ENCODE measurements at regions of chr11 and their contacts with region 1.

Region 1: DNA sequence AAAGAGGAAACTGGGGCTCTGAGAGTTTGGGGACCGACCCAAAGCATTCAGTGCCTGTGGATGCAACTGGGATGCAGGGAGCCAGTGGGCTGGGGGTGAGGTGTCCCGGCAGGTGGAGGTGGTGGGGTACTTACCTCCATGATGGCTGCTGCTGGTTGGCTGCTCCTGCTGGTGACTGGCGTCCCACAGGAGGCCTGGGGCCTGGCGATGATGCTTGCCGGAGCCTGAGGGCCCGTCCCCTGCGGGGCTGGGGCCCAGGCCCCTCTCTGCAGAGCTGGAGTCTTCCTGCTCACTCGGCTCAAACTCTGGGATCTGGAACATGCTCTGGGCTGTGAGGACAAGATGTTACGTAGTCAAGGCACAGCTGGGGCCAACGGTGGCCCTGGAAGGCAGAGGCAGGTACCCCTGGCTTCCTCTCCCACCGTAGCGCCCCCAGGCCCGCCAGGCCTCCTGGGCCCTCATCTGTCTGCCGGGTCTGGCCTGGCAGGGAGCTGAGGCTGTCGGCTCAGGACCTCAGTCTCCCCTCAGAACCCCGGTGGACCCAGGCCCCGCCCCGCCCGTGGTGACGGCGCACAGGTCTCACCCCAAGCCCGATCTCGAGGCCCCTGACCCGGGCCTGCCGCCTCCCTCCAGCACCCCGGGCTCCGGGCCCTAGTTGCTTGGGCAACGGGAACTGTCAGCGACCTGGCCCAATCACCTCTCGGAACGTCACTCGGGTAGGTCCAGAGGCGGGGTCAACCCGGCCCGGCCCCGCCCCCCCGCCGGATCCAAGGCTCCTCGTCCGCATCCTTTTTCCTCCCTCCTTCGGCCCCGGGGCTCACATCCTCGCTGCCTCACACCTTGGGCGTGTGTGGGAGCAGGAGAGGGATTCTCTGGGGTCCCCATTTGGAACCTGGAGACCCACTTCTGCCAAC is at the start of gene BAD:
- DNase-seq: no peak
- H3K4me3 ChIP-seq: peak within 1 kb of the TSS; percentile 73
- CTCF ChIP-seq: no peak

Region 2: DNA sequence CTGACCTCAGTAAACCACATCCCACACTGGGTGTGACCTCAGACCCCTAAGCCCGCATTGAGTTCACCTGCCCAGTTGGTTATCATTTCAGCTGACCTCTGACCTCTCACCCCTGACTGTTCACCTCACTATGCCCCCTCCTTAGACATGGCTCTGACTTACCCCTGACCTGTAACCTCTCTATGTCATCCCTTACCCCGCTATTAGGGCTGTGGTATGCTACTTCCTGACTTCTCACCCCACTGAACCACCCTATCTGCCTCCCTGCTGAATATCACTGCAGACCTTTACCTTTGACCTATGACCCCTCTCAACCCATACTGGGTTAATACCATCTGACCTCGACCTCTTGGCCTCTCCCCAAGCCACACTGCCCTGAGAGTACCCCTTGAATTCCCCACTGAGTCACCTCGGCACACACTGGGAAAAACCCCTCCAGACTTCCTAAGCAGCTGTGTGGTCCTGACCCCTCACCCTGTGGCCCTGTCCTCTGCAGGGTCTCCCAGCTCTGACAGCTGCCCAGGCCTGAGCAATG is 24.7 kb before region 1 on chr11:
- CTCF ChIA-PET with region 1: no interaction called
- POLR2A ChIA-PET with region 1: no interaction called
- DNase-seq: no peak
- H3K4me3 ChIP-seq: no peak overlapping the region
- CTCF ChIP-seq: no peak

Region 3: GRCh38 chr11:64269380-64270234 is 14.7 kb before region 1 on chr11:
- CTCF ChIA-PET with region 1: interaction called, 26 read pairs
- POLR2A ChIA-PET with region 1: interaction called, 9 read pairs
- DNase-seq: peak; percentile 99
- H3K4me3 ChIP-seq: peak overlapping the region; percentile 69
- CTCF ChIP-seq: no peak

Region 4: DNA sequence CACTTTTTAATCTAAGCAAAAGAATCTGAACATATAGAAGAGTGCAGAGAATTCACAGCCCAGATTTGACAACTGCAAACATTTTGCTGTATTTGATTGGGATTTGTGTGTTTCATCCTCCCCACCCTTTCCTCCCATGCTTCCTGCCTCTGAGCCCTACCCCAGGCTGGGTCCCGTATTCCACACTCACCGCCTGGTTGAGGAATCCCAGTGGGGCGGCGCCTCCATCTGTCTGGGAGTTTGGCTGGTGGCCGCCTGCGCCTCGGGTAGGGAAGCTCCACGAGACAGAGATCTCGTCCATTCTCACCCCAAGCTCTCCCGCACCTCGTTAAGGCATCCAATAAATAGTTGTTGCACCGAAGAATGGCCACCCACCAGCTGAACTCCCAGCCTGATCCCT is 200.8 kb after region 1 on chr11:
- CTCF ChIA-PET with region 1: no interaction called
- POLR2A ChIA-PET with region 1: no interaction called
- DNase-seq: no peak
- H3K4me3 ChIP-seq: no peak overlapping the region
- CTCF ChIP-seq: no peak